ENCODE measurements at regions of chr10 and their contacts with region 1.

Region 1: GRCh38 chr10:59234816-59235429 is 58.5 kb downstream of the PHYHIPL start:
- DNase-seq: peak in 1 of 2 experiments; percentile 1
- H3K4me3 ChIP-seq: no peak overlapping the region
- H3K27ac ChIP-seq: no peak overlapping the region
- H3K4me1 ChIP-seq: no peaks in the 10 kb centered on the region
- H3K27me3 ChIP-seq: no peaks in the 10 kb centered on the region
- CTCF ChIP-seq: peak; percentile 62

Region 2: GRCh38 chr10:58157076-58157766 is 1077.7 kb before region 1 on chr10:
- CTCF ChIA-PET with region 1: no interaction called
- POLR2A ChIA-PET with region 1: no interaction called
- intact Hi-C with region 1: no loop called
- DNase-seq: peak; percentile 49 to 55
- H3K4me3 ChIP-seq: no peak overlapping the region
- H3K27ac ChIP-seq: no peak overlapping the region
- H3K4me1 ChIP-seq: no peaks in the 10 kb centered on the region
- H3K27me3 ChIP-seq: no peaks in the 10 kb centered on the region
- CTCF ChIP-seq: no peak

Region 3: GRCh38 chr10:58775960-58776567 is 458.9 kb before region 1 on chr10:
- CTCF ChIA-PET with region 1: interaction called, 19 read pairs
- POLR2A ChIA-PET with region 1: no interaction called
- intact Hi-C with region 1: no loop called
- DNase-seq: no peak
- H3K4me3 ChIP-seq: no peak overlapping the region
- H3K27ac ChIP-seq: no peak overlapping the region
- H3K4me1 ChIP-seq: no peaks in the 10 kb centered on the region
- H3K27me3 ChIP-seq: no peaks in the 10 kb centered on the region
- CTCF ChIP-seq: no peak